Endothelial cell of umbilical vein (primary cell): ENCODE measurements at regions of chr3 and their contacts with region 1.

Region 1: DNA sequence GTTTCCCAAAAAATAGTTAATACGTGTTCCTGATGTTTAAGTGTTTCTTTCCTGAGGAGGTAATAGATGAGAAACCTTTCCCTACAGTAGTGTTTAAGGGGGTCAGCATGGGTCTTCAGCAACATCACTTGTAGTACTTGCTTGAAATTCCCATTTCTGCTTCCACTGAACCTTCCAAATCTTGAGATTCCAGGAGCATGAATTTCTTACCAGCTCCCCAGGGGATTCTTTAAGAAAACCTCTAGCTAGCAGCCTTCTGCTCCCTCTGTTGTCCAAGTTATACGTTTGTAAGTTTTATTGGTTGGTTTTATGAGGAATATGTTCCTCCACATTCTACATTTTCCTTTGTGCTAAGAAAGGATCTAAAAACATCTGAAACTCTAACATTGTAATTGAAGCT is 38.2 kb upstream of the ACP3 start:
- DNase-seq: no peak
- H3K4me3 ChIP-seq: no peak overlapping the region
- H3K27ac ChIP-seq: no peak overlapping the region
- H3K4me1 ChIP-seq: no peaks in the 10 kb centered on the region
- H3K27me3 ChIP-seq: peaks cover 0 to 2% of the 10 kb centered on the region in 2 experiments
- CTCF ChIP-seq: no peak
- POLR2A ChIP-seq: no peak

Region 2: GRCh38 chr3:132253262-132253878 is 25.7 kb before region 1 on chr3:
- CTCF ChIA-PET with region 1: no interaction called
- POLR2A ChIA-PET with region 1: no interaction called
- dilution Hi-C with region 1: no loop called
- intact Hi-C with region 1: no loop called
- DNase-seq: peak; percentile 63
- H3K4me3 ChIP-seq: no peak overlapping the region
- H3K27ac ChIP-seq: no peak overlapping the region
- H3K4me1 ChIP-seq: no peaks in the 10 kb centered on the region
- H3K27me3 ChIP-seq: peaks cover 0 to 3% of the 10 kb centered on the region in 2 experiments
- CTCF ChIP-seq: peak; percentile 57 to 64
- POLR2A ChIP-seq: no peak

Region 3: GRCh38 chr3:132268956-132269355 is 10.1 kb before region 1 on chr3:
- CTCF ChIA-PET with region 1: interaction called, 14 read pairs
- POLR2A ChIA-PET with region 1: no interaction called
- dilution Hi-C with region 1: no loop called
- intact Hi-C with region 1: no loop called
- DNase-seq: peak; percentile 10
- H3K4me3 ChIP-seq: no peak overlapping the region
- H3K27ac ChIP-seq: no peak overlapping the region
- H3K4me1 ChIP-seq: no peaks in the 10 kb centered on the region
- H3K27me3 ChIP-seq: no peaks in the 10 kb centered on the region
- CTCF ChIP-seq: peak in 1 of 2 donors; percentile 44
- POLR2A ChIP-seq: no peak

Region 4: DNA sequence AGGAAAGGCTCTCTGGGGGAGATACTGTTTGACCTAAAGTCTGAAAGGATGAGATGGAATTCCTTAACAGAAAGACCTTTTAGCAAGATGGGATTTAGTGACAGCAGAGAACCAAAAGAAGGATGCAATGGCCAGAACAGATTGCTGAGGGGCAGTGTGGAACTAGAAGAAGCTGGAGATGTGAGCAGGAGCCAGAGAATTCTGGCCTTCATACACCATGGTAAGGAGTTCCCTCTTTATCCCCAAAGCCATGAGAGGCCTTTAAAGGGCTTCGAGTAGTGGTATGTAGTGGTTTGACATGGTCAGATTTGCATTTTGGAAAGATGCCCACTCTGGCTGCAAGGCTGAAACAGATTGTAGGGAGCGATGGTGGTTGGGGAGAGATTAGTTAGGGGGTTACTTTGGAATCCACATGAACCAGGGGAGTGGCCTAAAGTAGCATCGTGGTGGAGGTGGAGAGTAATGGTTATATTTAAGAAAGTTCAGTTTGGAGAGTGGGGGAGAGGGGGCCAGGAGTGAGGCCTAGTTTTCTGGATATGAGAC is 477.1 kb after region 1 on chr3:
- CTCF ChIA-PET with region 1: no interaction called
- POLR2A ChIA-PET with region 1: no interaction called
- dilution Hi-C with region 1: no loop called
- intact Hi-C with region 1: no loop called
- DNase-seq: no peak
- H3K4me3 ChIP-seq: no peak overlapping the region
- H3K27ac ChIP-seq: no peak overlapping the region
- H3K4me1 ChIP-seq: no peaks in the 10 kb centered on the region
- H3K27me3 ChIP-seq: no peaks in the 10 kb centered on the region
- CTCF ChIP-seq: no peak
- POLR2A ChIP-seq: no peak